BJ (cell line): ENCODE measurements at regions of chr2 and their contacts with region 1.

Region 1: GRCh38 chr2:191501561-191502168 is 176.3 kb upstream of the NABP1 start:
- DNase-seq: no peak
- H3K4me3 ChIP-seq: no peak overlapping the region
- H3K27me3 ChIP-seq: no peaks in the 10 kb centered on the region
- CTCF ChIP-seq: peak; percentile 66

Region 2: DNA sequence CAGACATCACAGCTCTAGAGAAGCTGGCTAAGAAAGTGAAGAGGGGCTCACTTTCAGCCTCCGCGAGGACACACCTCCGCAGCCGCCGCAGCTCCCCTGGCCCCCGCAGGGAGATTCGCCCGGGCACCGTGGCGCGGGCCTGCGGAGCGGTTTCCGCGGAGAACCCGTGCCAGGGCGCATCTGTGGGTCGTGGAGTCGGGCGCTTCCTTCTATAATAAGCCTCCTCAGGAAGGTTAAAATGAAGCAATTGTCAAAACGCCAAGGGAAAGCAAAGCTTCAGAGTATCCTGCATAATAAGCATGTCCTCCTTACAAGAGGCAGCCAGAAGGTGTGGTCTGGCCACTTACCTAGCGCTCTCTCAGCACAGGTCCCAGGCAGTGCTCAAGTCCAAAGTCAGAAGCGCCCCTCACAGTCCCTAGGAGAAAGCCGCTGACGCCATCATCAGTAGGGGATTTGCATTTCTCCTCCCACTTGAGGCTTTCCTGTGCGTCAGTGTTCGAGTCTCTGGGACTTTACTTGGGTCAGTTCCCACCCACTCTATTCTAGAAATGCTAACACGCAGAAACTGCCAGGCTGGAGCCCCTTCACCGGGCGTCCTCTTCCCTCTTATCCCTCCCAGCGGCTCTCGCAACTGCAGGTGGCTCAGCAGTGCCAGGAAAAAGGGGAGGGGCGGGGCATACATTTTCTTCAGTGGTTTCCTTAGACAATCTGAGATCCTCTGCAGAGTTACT is 350.9 kb before region 1 on chr2 and contains the start of gene STAT4:
- CTCF ChIA-PET with region 1: interaction called, 15 read pairs
- POLR2A ChIA-PET with region 1: no interaction called
- DNase-seq: no peak
- H3K4me3 ChIP-seq: peak within 1 kb of the TSS; percentile 31
- H3K27me3 ChIP-seq: no peaks in the 10 kb centered on the region
- CTCF ChIP-seq: no peak
- polyA plus RNA-seq, gene STAT4: 1.3 and 1.5 TPM in 2 replicates

Region 3: DNA sequence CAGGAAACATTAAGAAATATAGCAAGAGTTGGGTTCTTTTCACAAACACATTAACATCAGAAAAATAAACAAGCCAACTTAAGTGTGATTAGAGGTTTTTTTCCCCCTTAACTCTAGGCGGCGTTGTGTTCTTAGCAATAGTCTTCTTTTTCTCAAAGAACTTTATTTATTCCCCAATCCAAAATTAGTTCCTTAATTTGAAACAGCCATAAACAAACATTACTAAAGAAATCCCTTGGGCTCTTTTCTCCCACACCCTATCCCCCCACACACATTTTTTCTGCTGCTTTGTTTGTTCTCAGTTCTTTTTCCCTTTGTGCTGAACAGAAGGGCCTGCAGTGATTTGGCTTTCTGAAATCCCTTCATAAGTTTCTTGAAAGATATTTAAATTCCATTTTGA is 269.7 kb before region 1 on chr2:
- CTCF ChIA-PET with region 1: interaction called, 49 read pairs
- POLR2A ChIA-PET with region 1: no interaction called
- DNase-seq: no peak
- H3K4me3 ChIP-seq: no peak overlapping the region
- H3K27me3 ChIP-seq: no peaks in the 10 kb centered on the region
- CTCF ChIP-seq: peak; percentile 69

Region 4: DNA sequence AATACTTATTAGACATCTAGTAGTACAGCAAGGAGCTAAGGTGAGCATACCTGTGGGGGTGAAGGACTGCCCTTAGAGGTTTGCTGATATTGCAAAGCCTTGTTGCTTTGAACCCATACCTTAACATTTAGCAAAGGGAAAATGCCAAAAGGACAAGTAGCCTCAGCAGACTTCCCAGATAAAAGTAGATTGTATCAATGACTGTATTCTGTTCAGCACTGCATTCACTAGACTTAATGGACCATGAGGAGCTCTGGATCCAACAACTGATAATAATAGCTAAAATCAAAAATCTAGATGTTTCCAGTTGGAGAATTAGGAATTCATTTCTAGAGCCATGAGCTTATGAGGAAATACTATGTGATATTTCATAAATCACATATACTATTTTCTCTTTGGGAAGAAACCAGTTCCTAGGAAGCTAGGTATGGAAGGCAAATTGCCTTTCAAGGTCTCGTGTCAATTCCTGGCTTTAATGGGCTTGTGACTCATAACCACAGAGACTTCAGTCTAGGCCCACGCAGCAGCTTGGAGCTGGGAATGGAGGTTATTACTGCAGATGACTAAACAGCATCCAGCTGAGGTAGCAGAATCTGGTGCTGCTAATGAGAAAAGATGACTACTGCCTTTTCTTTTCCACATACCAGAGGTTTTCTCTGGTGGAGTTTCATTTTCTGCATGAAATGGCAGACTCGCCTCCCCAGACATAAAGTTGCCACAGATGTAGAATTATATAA is 14.9 kb before region 1 on chr2:
- CTCF ChIA-PET with region 1: interaction called, 21 read pairs
- POLR2A ChIA-PET with region 1: no interaction called
- DNase-seq: peak; percentile 98
- H3K4me3 ChIP-seq: no peak overlapping the region
- H3K27me3 ChIP-seq: no peaks in the 10 kb centered on the region
- CTCF ChIP-seq: no peak